Naive thymus-derived CD8-positive, alpha-beta T cell (primary cell): ENCODE measurements at regions of chr13 and their contacts with region 1.

Region 1: GRCh38 chr13:29935309-29935981 is 85.0 kb upstream of the UBL3 start:
- DNase-seq: peak; percentile 18 to 84 (median 76)
- ATAC-seq: peak; percentile 94 to 95
- H3K4me3 Mint-ChIP-seq: peak overlapping the region; percentile 79 to 96 (median 89)
- H3K27ac Mint-ChIP-seq: peak overlapping the region; percentile 69 to 96 (median 92)
- H3K4me1 Mint-ChIP-seq: peaks cover 30 to 51% (median 44%) of the 10 kb centered on the region in 4 donors
- H3K27me3 Mint-ChIP-seq: peaks cover 0 to 2% (median 0%) of the 10 kb centered on the region in 5 donors

Region 2: GRCh38 chr13:29923554-29924481 is 11.6 kb before region 1 on chr13:
- POLR2A ChIA-PET with region 1: interaction called, 12 read pairs
- DNase-seq: peak in 9 of 10 donors; percentile 12 to 76 (median 38)
- ATAC-seq: peak; percentile 58 to 67
- H3K4me3 Mint-ChIP-seq: no peak overlapping the region
- H3K27ac Mint-ChIP-seq: peak overlapping the region in 2 of 10 donors; percentile 8 to 56
- H3K4me1 Mint-ChIP-seq: peaks cover 6 to 23% (median 14%) of the 10 kb centered on the region in 4 donors
- H3K27me3 Mint-ChIP-seq: no peaks in the 10 kb centered on the region

Region 3: GRCh38 chr13:29954082-29955028 is 18.9 kb after region 1 on chr13:
- POLR2A ChIA-PET with region 1: interaction called, 61 read pairs
- DNase-seq: peak in 9 of 10 donors; percentile 32 to 78 (median 64)
- ATAC-seq: peak; percentile 72 to 85
- H3K4me3 Mint-ChIP-seq: peak overlapping the region; percentile 76 to 94 (median 89)
- H3K27ac Mint-ChIP-seq: peak overlapping the region; percentile 63 to 98 (median 92)
- H3K4me1 Mint-ChIP-seq: peaks cover 30 to 68% (median 59%) of the 10 kb centered on the region in 4 donors
- H3K27me3 Mint-ChIP-seq: no peaks in the 10 kb centered on the region

Region 4: DNA sequence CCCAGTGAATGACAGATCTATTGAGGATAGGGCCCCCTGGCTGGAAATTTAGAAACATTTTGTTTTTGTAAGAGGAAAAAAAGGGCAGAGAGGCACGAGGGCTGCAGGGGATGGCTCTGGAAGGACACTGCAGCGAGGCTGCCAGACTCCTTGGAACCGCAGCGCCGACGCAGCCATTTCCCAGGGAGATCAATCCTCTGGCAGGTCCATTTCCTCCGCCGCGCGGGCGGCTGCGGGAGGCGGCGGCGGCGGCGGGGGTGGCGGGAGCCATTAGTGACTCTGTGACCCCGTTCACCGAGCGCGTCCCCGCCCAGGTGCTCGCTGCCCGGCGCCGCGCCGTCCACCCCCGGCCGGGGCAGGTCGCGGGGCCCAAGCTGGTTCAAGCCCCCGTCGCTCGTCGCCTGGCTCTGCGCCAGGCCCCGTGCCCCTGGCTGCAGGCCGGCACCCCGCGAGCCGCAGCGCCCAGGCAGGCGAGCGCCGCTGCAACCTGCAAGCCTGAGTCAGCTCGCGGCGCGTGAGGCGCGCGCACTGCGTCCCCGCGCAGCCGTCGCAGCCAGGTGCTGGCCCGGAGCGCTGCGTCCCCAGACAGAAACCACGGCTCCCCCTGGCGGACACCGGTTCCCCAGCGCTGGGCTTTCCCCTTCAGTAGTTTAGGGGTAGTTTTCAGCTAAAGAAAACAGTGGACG is 179.3 kb after region 1 on chr13:
- POLR2A ChIA-PET with region 1: interaction called, 39 read pairs
- DNase-seq: peak; percentile 81 to 94 (median 92)
- ATAC-seq: peak; percentile 93 to 95
- H3K4me3 Mint-ChIP-seq: peak overlapping the region; percentile 78 to 91 (median 84)
- H3K27ac Mint-ChIP-seq: peak overlapping the region in 9 of 10 donors; percentile 27 to 89 (median 63)
- H3K4me1 Mint-ChIP-seq: peaks cover 21 to 31% (median 30%) of the 10 kb centered on the region in 4 donors
- H3K27me3 Mint-ChIP-seq: no peaks in the 10 kb centered on the region